ENCODE measurements at regions of chr6 and their contacts with region 1.

Region 1: DNA sequence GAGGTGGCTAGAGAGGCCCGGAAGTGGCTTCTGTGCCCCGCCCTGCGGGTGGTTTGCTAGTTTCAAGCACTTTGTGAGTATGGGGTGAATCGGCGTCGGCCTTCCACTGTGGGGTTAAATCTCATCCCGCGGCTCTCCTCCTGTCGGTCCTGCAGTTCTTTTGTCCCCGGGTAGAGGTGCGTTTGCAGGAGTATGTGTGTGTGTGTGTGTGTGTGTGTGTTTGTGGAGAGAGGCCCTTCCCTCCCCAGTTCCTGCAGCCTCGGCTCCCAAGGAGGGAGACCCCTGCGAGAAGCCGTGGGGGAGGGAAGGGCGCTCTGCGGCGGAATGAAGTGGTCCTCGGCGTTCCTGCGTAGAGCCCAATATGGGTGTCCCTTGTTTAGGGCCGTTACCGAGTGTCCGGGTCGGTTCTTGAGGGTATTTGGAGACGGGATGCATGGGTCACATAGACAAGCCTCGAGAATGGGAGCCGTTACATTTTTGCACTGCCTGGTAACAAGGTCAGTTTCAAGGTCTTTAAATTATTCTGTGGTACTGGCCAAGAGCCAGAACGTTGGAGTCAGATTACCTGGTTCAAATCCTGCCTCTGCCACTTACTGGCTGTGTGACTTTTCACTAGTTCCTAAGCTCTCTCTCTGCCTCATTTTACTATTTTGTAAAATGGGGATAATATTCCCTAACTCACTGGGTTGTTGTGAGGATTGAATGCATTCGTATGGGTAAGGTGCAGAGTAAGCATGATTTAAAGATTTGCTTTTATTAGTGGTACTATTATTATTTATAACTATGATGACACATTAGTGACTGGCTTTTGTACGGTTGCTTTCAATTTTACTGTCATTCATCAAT is at the start of gene ZKSCAN3:
- DNase-seq: peak; percentile 53 to 83 (median 80)
- ATAC-seq: peak; percentile 98
- H3K4me3 ChIP-seq: peak within 1 kb of the TSS; percentile 80
- H3K4me3 Mint-ChIP-seq: peak within 1 kb of the TSS; percentile 94 to 100 (median 98)
- H3K27ac ChIP-seq: peak within 1 kb of the TSS; percentile 75
- H3K27ac Mint-ChIP-seq: peak within 1 kb of the TSS; percentile 90 to 97 (median 94)
- H3K4me1 ChIP-seq: peaks cover 0 to 7% of the 10 kb centered on the region in 2 donors
- H3K4me1 Mint-ChIP-seq: peaks cover 28 to 39% (median 35%) of the 10 kb centered on the region in 7 donors
- H3K27me3 ChIP-seq: peaks cover 0 to 4% of the 10 kb centered on the region in 2 donors
- H3K27me3 Mint-ChIP-seq: peaks cover 11 to 30% (median 12%) of the 10 kb centered on the region in 5 donors
- total RNA-seq, gene ZKSCAN3: 3.3 to 13.2 (median 5.8) TPM

Region 2: DNA sequence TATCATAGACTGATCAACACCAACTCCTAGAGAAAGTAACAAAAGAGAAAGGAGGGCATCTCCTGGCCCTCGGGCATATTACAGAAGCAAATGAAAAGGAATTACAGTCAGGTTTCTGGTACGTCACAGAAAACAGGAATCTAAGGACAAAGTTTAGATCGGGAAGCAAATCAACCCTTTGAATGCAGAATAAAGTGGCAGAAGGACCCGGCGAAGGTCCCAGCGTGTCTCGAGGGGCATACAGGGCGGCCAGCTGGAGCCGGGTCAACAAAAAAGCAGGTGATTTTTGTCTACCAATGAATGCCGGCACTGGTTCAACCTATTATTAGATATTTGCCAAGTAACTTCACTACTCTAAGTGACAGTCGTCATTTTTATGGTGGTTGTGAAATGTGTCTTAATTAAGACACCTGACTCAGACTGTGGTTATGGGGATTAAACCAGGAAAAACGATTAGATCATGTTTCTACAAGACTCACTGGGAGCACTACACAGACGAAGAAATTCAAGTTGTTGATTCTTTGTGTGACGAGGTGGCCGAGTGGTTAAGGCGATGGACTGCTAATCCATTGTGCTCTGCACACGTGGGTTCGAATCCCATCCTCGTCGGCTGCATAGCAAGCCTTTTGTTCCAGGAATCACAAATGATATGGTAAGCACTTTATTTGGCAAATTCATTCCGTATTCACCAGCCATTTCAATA is 137.5 kb before region 1 on chr6:
- CTCF ChIA-PET with region 1: no interaction called
- POLR2A ChIA-PET with region 1: no interaction called
- intact Hi-C with region 1: loop called in 1 of 2 experiments (anchors 1 kb)
- DNase-seq: peak in 1 of 9 donors; percentile 74
- ATAC-seq: no peak
- H3K4me3 ChIP-seq: no peak overlapping the region
- H3K4me3 Mint-ChIP-seq: peak overlapping the region; percentile 5 to 81 (median 23)
- H3K27ac ChIP-seq: no peak overlapping the region
- H3K27ac Mint-ChIP-seq: no peak overlapping the region
- H3K4me1 ChIP-seq: peaks cover 10% of the 10 kb centered on the region in 2 donors
- H3K4me1 Mint-ChIP-seq: peaks cover 11 to 28% (median 27%) of the 10 kb centered on the region in 7 donors
- H3K27me3 ChIP-seq: peaks cover 52 to 55% of the 10 kb centered on the region in 2 donors
- H3K27me3 Mint-ChIP-seq: peaks cover 87 to 99% (median 94%) of the 10 kb centered on the region in 5 donors